ENCODE measurements at regions of chr2 and their contacts with region 1.

Region 1: DNA sequence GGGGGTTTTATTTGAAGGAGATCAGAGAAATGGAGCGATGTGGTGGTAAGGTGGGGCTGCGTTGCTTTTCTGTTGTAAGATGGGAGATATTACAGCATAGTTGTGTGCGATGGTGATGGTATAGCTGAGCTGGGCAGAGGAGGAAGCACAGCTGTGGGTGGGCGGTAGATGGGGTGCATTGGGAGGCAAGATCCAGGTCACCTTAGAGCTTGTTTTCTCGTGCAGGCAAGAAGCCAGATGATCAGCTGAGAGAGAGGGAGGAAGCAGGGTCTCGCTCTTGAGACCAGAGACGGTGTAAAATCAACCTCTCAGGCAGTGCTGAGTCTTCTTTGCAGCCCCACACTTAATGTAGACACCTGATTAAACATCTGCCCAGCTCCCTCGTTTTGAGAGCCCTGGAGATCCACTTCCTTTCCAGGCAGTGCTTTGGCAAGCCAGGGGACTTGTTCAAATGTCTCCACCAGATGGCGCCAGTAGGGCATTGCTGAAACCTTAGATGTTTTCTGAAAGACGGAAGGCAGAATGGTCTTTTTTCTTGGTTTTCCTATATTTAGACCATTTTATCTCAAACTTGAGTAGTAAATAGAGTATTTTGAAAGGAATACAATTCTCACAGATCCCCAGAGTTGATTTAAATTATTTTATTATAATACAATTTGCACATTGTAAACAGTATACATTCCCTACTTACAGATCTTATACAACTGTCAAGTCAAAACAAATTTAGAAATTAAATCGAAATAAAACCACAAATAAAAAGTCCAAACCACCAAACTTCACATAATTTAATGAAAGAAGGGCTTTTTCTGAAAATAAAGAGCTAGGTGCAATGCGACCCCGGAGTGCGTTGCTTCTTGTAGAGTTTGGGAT is 21.1 kb upstream of the LYPD6B start:
- DNase-seq: peak; percentile 31
- H3K4me3 ChIP-seq: no peak overlapping the region
- CTCF ChIP-seq: peak; percentile 78

Region 2: GRCh38 chr2:148726228-148726627 is 291.1 kb before region 1 on chr2:
- CTCF ChIA-PET with region 1: no interaction called
- POLR2A ChIA-PET with region 1: no interaction called
- DNase-seq: no peak
- H3K4me3 ChIP-seq: no peak overlapping the region
- CTCF ChIP-seq: no peak

Region 3: GRCh38 chr2:149027590-149028218 is 10.4 kb after region 1 on chr2:
- CTCF ChIA-PET with region 1: interaction called, 67 read pairs
- POLR2A ChIA-PET with region 1: no interaction called
- DNase-seq: no peak
- H3K4me3 ChIP-seq: no peak overlapping the region
- CTCF ChIP-seq: no peak

Region 4: DNA sequence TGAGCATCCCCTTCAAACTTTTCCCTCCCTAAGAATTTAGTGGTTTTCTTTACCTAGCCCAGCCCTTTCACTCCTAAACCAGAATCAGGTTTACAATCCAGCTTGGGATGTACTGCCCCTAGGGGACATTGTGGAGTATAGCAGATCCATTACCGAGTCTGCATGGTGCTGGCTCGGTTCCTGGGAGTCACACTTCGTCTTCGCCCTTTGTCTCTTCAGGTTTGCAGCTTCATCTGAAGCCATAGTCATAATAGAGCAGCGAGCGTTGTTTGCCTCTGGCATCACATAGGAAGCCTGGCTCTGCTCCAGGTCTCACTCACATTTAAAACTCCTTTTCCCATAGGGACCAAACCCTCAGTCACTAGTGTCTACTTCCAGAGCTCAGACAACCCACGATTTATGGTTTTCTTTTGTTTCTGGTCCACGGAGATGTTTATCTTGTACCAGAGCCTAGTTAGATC is 296.2 kb after region 1 on chr2:
- CTCF ChIA-PET with region 1: interaction called, 43 read pairs
- POLR2A ChIA-PET with region 1: no interaction called
- DNase-seq: no peak
- H3K4me3 ChIP-seq: no peak overlapping the region
- CTCF ChIP-seq: peak; percentile 64

Region 5: DNA sequence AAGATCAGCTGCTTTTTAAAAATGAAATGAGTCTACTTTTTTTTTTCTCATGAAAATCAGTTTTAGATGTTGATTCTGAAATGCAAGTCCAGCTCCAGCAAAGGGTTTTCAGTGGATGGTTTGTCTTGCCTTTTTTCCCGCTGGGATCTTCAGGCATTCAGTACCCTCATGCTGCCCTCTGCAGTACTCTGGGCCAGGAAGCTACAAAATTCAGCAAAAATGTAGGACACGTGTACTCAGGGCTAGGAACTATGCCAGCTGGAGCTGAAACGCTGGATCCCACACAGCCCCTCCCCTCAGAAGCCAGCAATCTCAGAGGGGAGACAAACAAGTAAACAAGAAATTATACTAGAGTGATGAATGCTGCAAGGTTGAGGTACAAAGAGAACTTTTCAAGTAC is 472.9 kb after region 1 on chr2:
- CTCF ChIA-PET with region 1: interaction called, 17 read pairs
- POLR2A ChIA-PET with region 1: no interaction called
- DNase-seq: no peak
- H3K4me3 ChIP-seq: no peak overlapping the region
- CTCF ChIP-seq: peak; percentile 38

Region 6: DNA sequence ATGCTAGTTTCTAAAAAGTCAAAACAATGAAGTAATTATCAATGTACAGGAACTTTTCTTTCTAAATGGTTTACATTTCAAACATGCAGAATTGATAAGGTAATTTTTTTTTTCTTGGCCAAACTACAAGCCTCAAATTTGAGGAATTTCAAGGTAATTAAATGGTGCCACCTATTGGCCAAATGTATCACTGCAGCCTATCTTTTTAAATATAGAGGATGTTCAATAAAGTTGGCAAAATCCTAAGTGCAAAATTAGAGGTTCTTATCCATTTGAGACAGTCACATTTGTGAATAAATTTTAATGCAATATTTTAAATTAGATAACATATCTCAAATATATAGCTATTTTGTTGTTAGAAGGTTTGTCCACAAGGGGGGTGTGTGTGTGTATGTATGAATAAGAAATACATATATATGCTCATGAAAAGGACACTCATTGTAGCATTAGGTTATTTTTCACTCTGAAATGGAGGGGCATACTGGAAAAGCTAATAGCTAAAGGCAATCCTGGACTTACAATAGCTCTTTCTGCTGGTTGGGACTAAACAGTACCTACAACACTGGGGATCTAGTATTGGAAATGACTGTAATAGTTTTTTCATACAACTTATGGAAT is 544.1 kb after region 1 on chr2:
- CTCF ChIA-PET with region 1: interaction called, 180 read pairs
- POLR2A ChIA-PET with region 1: no interaction called
- DNase-seq: no peak
- H3K4me3 ChIP-seq: no peak overlapping the region
- CTCF ChIP-seq: peak; percentile 41